Heart right ventricle (tissue), 16 donors: ENCODE measurements at regions of chr10 and their contacts with region 1.

Region 1: GRCh38 chr10:23293145-23293724 is 51.4 kb downstream of the C10orf67 start:
- DNase-seq: no peak
- ATAC-seq: no peak
- H3K4me3 ChIP-seq: no peak overlapping the region
- H3K27ac ChIP-seq: no peak overlapping the region
- H3K4me1 ChIP-seq: no peaks in the 10 kb centered on the region
- H3K27me3 ChIP-seq: peaks cover 0 to 25% (median 12%) of the 10 kb centered on the region in 7 donors
- CTCF ChIP-seq: peak in 4 of 9 donors; percentile 19 to 48 (median 38)

Region 2: GRCh38 chr10:23391821-23392220 is 98.6 kb after region 1 on chr10:
- intact Hi-C with region 1: no loop called
- DNase-seq: no peak
- ATAC-seq: no peak
- H3K4me3 ChIP-seq: no peak overlapping the region
- H3K27ac ChIP-seq: no peak overlapping the region
- H3K4me1 ChIP-seq: no peaks in the 10 kb centered on the region
- H3K27me3 ChIP-seq: no peaks in the 10 kb centered on the region
- CTCF ChIP-seq: no peak

Region 3: GRCh38 chr10:23656735-23657134 is 363.5 kb after region 1 on chr10:
- intact Hi-C with region 1: loop called in 1 of 10 experiments (anchors 5 kb)
- DNase-seq: no peak
- ATAC-seq: no peak
- H3K4me3 ChIP-seq: no peak overlapping the region
- H3K27ac ChIP-seq: no peak overlapping the region
- H3K4me1 ChIP-seq: no peaks in the 10 kb centered on the region
- H3K27me3 ChIP-seq: peaks cover 0 to 15% (median 0%) of the 10 kb centered on the region in 7 donors
- CTCF ChIP-seq: peak in 8 of 9 donors; percentile 9 to 66 (median 50)